Tibial artery (tissue), 4 donors: ENCODE measurements at regions of chr7 and their contacts with region 1.

Region 1: GRCh38 chr7:32204361-32205018 is 134.3 kb upstream of the PDE1C start:
- DNase-seq: peak; percentile 61 to 87
- H3K4me3 ChIP-seq: peak overlapping the region; percentile 36 to 43
- H3K27ac ChIP-seq: peak overlapping the region in 1 of 2 donors; percentile 19
- H3K4me1 ChIP-seq: no peaks in the 10 kb centered on the region
- H3K27me3 ChIP-seq: peaks cover 0 to 6% of the 10 kb centered on the region in 2 donors
- CTCF ChIP-seq: peak; percentile 89 to 97

Region 2: DNA sequence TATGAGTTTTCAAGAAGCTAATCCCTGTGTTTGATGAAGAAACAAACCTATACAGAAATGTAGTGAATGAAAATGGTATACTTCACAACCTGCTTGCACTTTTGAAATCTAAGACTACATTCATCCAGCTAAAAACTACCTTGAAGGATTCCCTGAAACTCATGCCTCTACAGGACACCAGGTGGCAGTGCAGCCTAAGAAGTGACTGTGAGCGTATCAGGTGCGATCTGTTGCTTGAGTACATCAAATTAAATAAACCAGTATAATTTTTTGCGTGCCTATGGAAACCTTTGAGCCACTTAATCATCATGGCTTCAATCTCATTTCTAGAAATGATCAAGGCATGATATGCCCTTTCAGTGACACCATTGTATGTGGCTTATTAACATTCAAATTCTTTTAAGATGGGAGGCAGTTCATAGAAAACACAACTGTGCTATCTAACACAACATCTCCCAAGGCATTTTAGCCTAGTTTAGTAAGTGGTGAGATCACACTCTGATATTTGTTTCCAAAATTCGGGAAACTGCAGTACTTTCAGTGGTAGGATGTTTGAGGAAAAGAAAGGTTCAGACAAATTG is 460.1 kb before region 1 on chr7:
- intact Hi-C with region 1: loop called (anchors 5 kb)
- DNase-seq: peak; percentile 68 to 72
- H3K4me3 ChIP-seq: no peak overlapping the region
- H3K27ac ChIP-seq: no peak overlapping the region
- H3K4me1 ChIP-seq: no peaks in the 10 kb centered on the region
- H3K27me3 ChIP-seq: no peaks in the 10 kb centered on the region
- CTCF ChIP-seq: peak; percentile 84 to 94

Region 3: DNA sequence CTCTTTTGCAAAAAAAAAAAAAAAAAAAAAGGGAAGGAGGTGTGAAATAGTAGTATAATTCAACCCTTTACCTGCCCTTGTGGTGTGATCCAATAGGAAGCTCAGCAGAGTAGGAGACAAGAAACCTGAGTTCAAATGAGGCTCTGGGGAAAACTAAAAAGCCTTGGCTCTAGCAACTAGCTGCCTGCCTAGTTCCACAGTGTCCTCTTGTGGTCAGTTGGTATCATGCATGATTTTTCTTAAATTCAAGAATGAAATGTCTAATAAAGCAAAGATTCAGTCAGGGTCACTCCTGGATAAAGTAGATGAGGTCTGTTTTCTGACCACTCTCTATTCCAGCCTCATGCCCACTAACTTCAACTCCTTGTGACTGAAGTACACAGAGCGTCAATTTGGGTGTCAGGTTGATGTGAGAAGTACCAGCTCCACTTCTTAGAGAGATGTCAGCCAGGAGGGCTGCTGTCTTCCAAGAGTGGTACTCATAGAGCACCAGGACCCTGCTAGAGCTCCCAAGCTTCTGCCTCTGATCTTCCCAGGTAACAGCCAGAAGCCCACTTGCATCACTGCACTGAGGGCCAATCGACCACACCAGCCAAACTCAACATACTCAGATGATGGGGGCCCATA is 275.2 kb after region 1 on chr7:
- intact Hi-C with region 1: loop called (anchors 5 kb)
- DNase-seq: no peak
- H3K4me3 ChIP-seq: no peak overlapping the region
- H3K27ac ChIP-seq: no peak overlapping the region
- H3K4me1 ChIP-seq: peaks cover 0 to 8% (median 2%) of the 10 kb centered on the region in 4 donors
- H3K27me3 ChIP-seq: no peaks in the 10 kb centered on the region
- CTCF ChIP-seq: peak; percentile 58 to 64

Region 4: DNA sequence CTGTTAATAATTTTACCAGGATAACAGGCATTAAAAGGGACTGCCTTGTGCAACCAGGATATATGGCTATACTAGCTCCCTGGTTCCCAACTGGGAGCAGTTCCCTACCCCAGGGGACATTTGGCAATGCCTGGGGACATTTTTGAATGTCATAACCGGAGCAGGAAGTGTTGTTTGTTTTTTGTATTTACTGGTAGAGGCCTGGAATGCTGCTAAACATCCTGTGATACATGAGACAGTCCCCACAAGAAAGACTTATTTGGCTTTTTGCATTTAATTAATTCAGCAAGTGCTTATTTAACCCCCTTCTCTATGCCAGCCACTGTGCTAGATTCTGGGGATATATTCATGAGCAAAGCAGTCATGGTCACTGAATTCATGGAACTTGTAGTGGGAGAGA is 1106.1 kb after region 1 on chr7:
- intact Hi-C with region 1: no loop called
- DNase-seq: no peak
- H3K4me3 ChIP-seq: no peak overlapping the region
- H3K27ac ChIP-seq: no peak overlapping the region
- H3K4me1 ChIP-seq: no peaks in the 10 kb centered on the region
- H3K27me3 ChIP-seq: no peaks in the 10 kb centered on the region
- CTCF ChIP-seq: no peak